ENCODE measurements at regions of chr1 and their contacts with region 1.

Region 1: GRCh38 chr1:112803906-112804762 is 89.0 kb upstream of the PPM1J start:
- DNase-seq: peak; percentile 73

Region 2: GRCh38 chr1:112735752-112736151 is 68.4 kb before region 1 on chr1:
- in situ Hi-C with region 1: loop called (anchors 10 kb)
- DNase-seq: no peak

Region 3: GRCh38 chr1:112964347-112964746 is 160.2 kb after region 1 on chr1:
- in situ Hi-C with region 1: no loop called
- DNase-seq: no peak

Region 4: DNA sequence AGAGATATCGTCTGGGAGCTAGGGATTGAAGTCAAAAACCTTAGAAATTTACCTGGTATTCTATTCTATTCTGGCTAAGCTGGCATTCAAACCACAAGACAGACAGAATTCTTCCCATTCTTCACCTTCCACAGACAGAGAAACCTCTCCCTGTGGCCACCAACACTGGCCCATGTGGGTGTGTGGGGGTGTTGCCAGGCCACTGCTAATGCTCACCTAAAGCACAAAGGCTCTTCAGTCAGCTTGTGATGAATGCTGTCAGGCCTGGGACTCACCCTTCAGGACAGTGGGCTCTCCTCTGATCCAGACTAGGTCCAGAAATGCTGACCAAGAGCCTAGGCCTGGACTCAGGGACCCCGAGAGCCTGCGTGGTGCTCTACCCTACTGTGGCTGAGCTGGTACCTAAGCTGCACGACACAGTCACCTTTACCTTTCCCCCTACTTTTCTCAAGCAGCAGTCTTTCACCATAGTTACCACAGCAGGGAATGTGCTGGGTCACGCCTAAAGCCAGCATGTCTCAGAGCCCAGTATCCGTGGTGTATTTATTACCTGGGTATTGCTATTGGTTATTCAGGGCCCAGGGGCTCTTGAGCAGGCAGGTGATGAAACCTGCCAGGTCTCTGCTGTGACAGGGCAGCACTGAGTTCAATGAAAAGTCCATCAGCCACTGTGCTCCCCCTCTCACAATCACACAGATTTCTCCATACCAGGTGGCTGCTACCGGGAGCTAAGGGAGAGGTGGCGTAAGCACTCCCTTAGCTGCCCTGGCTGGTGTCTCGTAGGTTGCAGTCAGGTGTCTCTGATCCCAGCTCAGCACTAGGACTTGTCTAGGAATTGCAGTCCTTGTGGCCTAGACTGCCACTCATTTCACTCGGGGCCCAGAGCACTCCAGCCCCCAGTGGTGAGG is 826.2 kb after region 1 on chr1:
- in situ Hi-C with region 1: no loop called
- DNase-seq: no peak

Measured in KBM-7 (cell line).